Right ventricle myocardium superior (tissue), 1 donor: ENCODE measurements at regions of chr4 and their contacts with region 1.

Region 1: GRCh38 chr4:153432968-153433753 is 33.0 kb upstream of the TMEM131L start:
- DNase-seq: peak; percentile 47
- ATAC-seq: peak; percentile 92

Region 2: DNA sequence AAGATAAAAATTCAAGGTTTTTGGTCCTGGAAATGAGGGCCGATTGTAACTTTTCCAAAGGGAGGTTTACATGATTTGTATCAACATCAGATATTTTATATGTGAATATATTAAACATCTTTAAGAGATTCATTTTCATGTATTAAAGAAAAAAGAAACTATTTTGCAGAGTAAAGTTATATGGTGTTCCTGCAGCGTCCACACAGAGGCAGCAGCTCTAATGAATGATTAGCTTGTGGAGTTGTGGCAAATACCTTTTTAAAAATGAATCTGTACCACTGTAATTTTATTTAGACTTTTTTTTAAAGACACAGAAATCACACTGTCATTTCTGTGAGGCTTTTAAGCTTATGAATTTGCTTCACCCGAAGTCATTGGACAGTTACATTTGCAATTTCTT is 522.6 kb before region 1 on chr4:
- intact Hi-C with region 1: no loop called
- DNase-seq: no peak
- ATAC-seq: no peak

Region 3: DNA sequence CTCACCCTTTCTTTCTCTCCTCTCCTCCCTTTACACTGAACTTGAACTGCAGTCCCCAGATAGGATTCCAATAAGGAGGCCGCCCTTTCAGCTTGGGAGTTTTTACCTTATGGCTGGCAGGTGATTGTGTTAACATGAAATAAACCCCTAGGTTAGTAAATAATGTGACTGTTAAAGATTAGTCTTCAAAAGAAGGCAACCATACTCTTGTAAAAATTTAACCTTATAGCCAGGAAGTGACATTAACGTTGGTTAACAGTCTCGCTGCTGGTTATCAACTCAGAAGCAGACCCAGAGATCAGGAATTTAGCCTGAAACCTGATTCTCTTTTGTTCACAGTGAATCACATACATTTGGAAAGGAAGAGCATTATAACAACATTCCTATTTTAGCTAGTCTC is 481.8 kb before region 1 on chr4:
- intact Hi-C with region 1: no loop called
- DNase-seq: no peak
- ATAC-seq: no peak

Region 4: GRCh38 chr4:153573881-153574802 is 141.0 kb after region 1 on chr4:
- intact Hi-C with region 1: loop called (anchors 5 kb)
- DNase-seq: peak; percentile 81
- ATAC-seq: peak; percentile 90